ENCODE measurements at regions of chr1 and their contacts with region 1.

Region 1: DNA sequence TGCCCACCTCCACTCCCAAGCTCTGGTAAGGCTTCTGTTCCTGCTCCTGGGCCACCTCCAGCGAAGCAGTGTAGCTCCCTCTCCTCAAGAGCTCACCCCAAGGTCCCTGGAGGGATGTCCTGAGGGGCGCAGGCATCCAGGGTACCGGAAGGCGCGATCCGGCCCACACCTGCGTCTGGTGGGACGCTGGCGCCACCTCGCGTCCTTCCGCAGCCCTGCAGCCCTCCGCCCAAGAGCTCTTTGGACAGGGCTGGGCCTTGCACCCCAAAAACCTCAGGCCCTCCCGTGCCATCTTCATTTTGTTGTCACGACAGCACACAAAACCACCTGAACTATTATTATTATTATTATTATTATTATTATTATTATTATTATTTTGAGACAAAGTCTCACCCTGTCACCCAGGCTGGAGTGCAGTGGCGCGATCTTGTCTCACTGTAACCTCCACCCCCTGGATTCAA is 49.2 kb upstream of the PAX7 start:
- H3K4me3 ChIP-seq: no peak overlapping the region
- H3K27ac ChIP-seq: no peak overlapping the region
- H3K4me1 ChIP-seq: no peaks in the 10 kb centered on the region
- CTCF ChIP-seq: peak; percentile 85

Region 2: GRCh38 chr1:17661546-17662157 is 919.8 kb before region 1 on chr1:
- CTCF ChIA-PET with region 1: interaction called, 20 read pairs
- POLR2A ChIA-PET with region 1: no interaction called
- H3K4me3 ChIP-seq: no peak overlapping the region
- H3K27ac ChIP-seq: no peak overlapping the region
- H3K4me1 ChIP-seq: no peaks in the 10 kb centered on the region
- CTCF ChIP-seq: peak; percentile 79

Region 3: DNA sequence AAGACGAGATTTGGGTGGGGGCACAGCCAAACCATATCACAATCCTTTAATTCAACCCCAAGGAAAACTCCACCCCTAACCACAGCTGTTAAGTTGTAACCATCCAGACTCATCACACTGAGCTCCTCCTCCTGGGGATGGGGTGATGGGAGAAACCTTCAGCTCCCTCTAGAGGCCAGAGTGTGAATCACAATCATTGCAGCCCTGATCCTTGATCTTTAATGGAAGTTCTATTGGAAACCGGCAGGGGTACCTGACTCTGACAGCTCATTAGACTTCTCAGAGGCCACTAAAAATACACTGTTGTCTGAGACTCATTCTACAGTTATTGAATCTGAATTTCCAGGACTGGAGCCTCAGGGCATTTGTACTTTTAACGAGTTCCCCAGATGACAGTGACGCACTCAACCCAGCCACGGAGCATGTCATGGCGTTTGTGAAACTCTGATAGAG is 346.6 kb before region 1 on chr1:
- CTCF ChIA-PET with region 1: interaction called, 12 read pairs
- POLR2A ChIA-PET with region 1: no interaction called
- H3K4me3 ChIP-seq: no peak overlapping the region
- H3K27ac ChIP-seq: no peak overlapping the region
- H3K4me1 ChIP-seq: no peaks in the 10 kb centered on the region
- CTCF ChIP-seq: no peak

Region 4: GRCh38 chr1:18299441-18300338 is 281.8 kb before region 1 on chr1:
- CTCF ChIA-PET with region 1: interaction called, 17 read pairs
- POLR2A ChIA-PET with region 1: no interaction called
- H3K4me3 ChIP-seq: no peak overlapping the region
- H3K27ac ChIP-seq: no peak overlapping the region
- H3K4me1 ChIP-seq: no peaks in the 10 kb centered on the region
- CTCF ChIP-seq: 0 out of 2 replicates have a peak, but pooled peaks have one; percentile 28

Region 5: DNA sequence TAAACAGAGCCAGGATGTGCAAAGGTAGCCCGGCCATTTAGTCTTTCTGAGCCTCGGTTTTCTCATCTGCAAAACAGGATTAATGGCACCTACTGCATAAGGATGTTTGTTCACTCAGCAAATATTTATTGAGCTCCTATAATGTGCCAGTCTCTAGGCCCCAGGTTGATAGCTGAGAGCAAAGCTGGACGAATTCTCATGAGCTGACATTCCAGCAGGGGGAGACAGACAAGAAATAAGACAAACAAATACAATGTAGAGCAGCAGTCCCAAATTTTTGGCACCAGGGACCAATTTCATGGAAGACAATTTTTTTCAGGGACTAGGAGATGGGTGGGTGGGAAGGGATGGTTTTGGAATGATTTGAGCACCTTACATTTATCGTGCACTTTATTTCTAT is 25.1 kb before region 1 on chr1:
- CTCF ChIA-PET with region 1: interaction called, 30 read pairs
- POLR2A ChIA-PET with region 1: interaction called, 3 read pairs
- H3K4me3 ChIP-seq: no peak overlapping the region
- H3K27ac ChIP-seq: no peak overlapping the region
- H3K4me1 ChIP-seq: no peaks in the 10 kb centered on the region
- CTCF ChIP-seq: no peak

Region 6: GRCh38 chr1:18592367-18592766 is 10.9 kb after region 1 on chr1:
- CTCF ChIA-PET with region 1: interaction called, 12 read pairs
- POLR2A ChIA-PET with region 1: no interaction called
- H3K4me3 ChIP-seq: no peak overlapping the region
- H3K27ac ChIP-seq: no peak overlapping the region
- H3K4me1 ChIP-seq: no peaks in the 10 kb centered on the region
- CTCF ChIP-seq: no peak

Region 7: DNA sequence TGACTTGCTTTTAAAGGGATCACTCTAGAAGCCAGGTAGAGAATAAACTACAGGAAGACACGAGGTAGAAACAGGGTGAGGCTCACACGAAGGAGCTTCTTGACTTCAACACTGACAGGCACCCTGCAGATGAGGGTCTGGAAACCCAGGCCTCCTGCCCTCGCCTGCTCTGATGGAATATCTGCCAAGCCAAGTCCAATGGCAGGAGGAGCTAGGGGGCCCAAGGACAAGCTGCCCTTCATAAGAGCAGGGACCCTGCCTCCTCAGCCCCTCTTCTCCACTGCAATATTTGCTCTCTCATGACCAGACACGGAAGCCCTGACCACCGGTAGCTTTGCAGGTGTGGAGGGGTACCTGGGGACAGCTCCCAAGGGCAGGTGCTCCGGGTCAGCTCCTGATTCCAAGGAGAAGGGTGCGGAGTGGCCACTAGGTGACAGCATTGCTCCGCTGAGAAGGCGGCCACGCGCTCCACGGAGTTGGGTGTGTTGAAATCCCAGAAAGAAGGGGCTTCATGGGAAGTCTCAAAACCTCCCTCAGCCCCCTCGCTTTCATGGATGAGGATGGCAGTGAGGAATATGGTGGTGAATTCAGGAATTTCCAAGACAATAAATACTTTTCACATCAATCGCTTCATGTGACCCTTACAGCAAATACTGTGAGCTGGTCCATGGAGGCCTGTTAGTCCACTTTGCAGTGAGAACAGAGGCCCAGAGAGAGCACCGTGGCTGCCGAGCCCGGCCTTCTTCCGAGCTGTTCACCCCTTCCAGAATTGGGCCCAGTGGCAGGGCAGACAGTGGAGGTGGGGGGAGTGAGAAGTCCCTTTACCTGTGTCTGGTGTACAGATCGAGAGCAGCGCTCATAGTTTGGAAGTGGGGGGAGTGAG is 16.0 kb after region 1 on chr1:
- CTCF ChIA-PET with region 1: interaction called, 12 read pairs
- POLR2A ChIA-PET with region 1: no interaction called
- H3K4me3 ChIP-seq: no peak overlapping the region
- H3K27ac ChIP-seq: no peak overlapping the region
- H3K4me1 ChIP-seq: no peaks in the 10 kb centered on the region
- CTCF ChIP-seq: peak; percentile 95